Calu3 (cell line): ENCODE measurements at regions of chr9 and their contacts with region 1.

Region 1: DNA sequence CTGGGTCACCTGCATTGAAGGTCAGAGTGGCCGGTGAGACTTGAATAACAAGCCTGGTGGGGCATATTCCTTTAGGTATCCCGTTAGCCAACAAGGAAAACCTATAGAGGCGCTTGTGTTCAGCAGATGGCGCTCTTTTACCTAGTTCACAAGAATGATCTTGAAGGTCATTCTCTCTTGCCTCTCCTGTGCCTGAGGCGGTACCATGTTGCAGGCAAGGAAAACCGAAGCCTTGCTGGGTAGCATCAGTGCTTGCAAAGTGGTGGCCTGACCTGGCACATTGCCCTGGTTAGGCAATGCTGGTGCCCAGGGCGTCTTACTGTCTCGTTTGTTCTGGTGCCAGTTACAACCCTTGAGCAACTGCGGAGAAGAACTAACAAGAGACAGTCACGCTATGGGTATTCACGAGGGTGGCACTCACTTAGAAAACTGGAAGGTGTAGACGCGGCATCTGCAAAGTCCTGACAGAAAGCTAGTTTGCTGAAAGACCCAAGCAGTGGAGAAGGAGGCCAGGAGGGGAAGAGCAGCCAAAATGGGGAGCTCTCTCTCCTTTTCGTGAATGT is 56.7 kb downstream of the AOPEP start:
- DNase-seq: peak; percentile 91
- H3K4me3 Mint-ChIP-seq: no peak overlapping the region
- H3K27ac Mint-ChIP-seq: peak overlapping the region; percentile 75
- H3K4me1 Mint-ChIP-seq: peaks cover 9% of the 10 kb centered on the region
- H3K27me3 Mint-ChIP-seq: no peaks in the 10 kb centered on the region
- CTCF ChIP-seq: peak; percentile 54

Region 2: GRCh38 chr9:94681508-94681907 is 101.7 kb before region 1 on chr9:
- CTCF ChIA-PET with region 1: no interaction called
- intact Hi-C with region 1: loop called (anchors 5 kb)
- DNase-seq: peak; percentile 66
- H3K4me3 Mint-ChIP-seq: no peak overlapping the region
- H3K27ac Mint-ChIP-seq: no peak overlapping the region
- H3K4me1 Mint-ChIP-seq: peaks cover 9% of the 10 kb centered on the region
- H3K27me3 Mint-ChIP-seq: peaks cover 12% of the 10 kb centered on the region
- CTCF ChIP-seq: peak; percentile 37

Region 3: DNA sequence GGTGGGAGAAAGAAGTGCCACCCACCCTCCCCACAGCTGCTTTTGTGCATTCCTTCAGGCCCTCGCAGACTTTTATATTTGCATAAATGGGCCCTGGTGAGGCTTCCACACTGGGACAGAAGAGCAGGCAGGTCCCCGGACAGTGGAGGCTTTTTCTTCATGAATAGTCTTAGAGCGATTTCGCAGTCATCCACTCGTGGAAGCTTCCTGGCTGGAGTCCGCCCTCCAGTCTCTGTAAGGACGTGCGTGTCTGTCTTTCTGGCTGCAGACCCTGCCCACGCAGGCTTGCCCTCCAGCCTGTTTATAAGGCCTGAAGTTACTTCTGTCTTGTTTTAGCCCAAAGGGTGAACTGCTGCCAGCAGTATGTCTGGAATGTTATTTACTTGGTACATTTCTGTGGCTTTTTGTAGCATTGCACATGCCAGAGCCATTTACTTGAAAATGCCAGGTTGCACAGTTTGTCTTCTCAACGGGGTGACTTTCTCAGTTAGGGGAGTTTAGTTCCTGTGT is 139.0 kb after region 1 on chr9:
- CTCF ChIA-PET with region 1: interaction called, 4 read pairs
- intact Hi-C with region 1: loop called (anchors 1 kb)
- DNase-seq: peak; percentile 53
- H3K4me3 Mint-ChIP-seq: peak overlapping the region; percentile 56
- H3K27ac Mint-ChIP-seq: peak overlapping the region; percentile 88
- H3K4me1 Mint-ChIP-seq: peaks cover 85% of the 10 kb centered on the region
- H3K27me3 Mint-ChIP-seq: no peaks in the 10 kb centered on the region
- CTCF ChIP-seq: no peak

Region 4: GRCh38 chr9:95003689-95004410 is 220.7 kb after region 1 on chr9:
- CTCF ChIA-PET with region 1: no interaction called
- intact Hi-C with region 1: loop called (anchors 2 kb)
- DNase-seq: peak; percentile 58
- H3K4me3 Mint-ChIP-seq: peak overlapping the region; percentile 81
- H3K27ac Mint-ChIP-seq: peak overlapping the region; percentile 36
- H3K4me1 Mint-ChIP-seq: peaks cover 11% of the 10 kb centered on the region
- H3K27me3 Mint-ChIP-seq: no peaks in the 10 kb centered on the region
- CTCF ChIP-seq: no peak

Region 5: DNA sequence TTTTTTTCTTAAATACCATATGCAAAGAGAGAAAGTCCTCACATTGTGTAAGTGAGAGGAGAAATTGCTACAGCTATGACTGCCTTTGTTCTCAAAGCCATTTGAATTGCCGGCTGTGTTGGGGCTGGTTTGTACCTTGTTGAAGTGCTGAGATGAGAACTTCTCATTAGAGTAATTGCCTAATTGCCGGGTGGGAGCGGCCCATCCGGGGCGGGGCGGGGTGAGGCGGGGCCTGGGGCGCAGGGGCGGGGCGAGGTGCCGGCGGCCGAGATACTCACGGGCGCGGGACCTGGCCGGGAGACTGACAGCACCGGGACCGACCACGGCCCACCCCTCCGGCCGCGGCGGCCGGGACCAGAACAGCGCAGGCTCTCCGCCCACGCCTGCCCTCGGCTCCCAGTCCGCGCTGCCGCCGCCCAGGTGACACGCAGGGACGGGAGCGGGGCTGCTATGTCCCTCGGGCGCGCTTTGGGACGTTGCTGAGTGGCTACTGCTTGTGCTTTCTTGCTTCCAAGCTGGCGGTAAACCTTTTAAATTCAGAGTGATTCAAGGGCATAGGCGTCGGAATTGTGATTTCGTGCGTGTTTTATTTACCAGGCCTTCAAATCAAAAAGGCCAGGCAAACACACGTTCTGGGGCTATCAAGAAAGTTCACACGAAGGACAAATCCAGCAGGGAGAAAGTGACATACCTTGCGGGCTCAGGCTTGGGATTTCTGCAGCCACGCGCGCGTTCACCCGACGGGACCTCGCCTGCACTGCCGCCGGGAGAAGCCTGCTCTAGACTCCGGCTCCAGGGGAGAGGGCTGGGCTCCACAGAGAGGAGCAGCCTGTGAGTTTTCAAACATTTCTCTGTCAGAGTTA is 265.3 kb after region 1 on chr9:
- CTCF ChIA-PET with region 1: no interaction called
- intact Hi-C with region 1: loop called (anchors 5 kb)
- DNase-seq: peak; percentile 84
- H3K4me3 Mint-ChIP-seq: peak overlapping the region; percentile 75
- H3K27ac Mint-ChIP-seq: peak overlapping the region; percentile 91
- H3K4me1 Mint-ChIP-seq: peaks cover 12% of the 10 kb centered on the region
- H3K27me3 Mint-ChIP-seq: no peaks in the 10 kb centered on the region
- CTCF ChIP-seq: no peak

Region 6: DNA sequence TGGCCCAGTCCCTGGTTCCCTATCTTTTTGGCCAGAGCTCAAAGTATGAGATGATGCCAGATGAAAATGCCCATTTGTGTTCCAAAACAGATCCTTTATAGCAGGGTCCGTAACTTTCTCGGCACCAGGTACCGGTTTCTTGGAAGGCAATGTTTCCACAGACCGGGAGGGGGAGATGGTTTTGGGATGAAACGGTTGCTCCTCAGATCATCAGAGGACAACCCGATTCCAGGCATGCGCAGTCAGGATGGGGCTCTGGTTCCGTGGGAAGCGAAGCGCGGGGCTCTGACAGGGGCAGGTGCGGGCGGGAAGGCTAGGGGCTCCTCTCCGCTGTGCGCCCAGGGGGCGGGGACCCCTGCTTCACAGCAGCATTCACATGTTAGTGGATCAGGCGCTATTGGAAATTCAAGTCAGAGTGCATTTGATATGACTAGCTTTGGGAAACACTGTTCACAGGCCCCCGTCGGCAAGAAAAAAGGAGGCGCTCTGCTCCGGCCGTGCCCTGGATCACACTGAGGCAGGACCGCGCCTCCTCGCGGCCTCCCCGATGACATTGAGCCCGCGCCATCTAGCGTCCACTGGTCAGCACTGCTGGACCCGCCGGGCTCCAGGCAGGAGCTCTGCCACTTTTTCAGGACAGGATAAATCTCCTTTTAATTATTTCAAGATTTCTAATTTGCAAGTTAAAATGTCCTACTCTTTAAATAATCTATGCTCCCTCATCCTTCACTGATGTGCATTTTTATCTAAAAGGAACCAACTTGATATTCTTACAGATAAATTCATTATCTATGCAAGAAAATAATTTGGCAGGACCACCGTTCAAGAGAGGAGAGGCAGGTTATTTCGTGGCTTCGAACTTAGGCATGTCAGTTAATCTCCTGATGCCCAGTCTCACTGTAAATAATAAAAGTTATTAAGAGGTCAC is 344.3 kb after region 1 on chr9:
- CTCF ChIA-PET with region 1: interaction called, 3 read pairs
- intact Hi-C with region 1: loop called (anchors 2 kb)
- DNase-seq: peak; percentile 80
- H3K4me3 Mint-ChIP-seq: no peak overlapping the region
- H3K27ac Mint-ChIP-seq: no peak overlapping the region
- H3K4me1 Mint-ChIP-seq: peaks cover 19% of the 10 kb centered on the region
- H3K27me3 Mint-ChIP-seq: no peaks in the 10 kb centered on the region
- CTCF ChIP-seq: peak; percentile 79